ENCODE measurements at regions of chr7 and their contacts with region 1.

Region 1: GRCh38 chr7:95582578-95583293 is 13.6 kb downstream of the PDK4 start:
- DNase-seq: peak in 2 of 4 donors; percentile 15 to 42
- ATAC-seq: peak; percentile 45
- H3K4me3 ChIP-seq: no peak overlapping the region
- H3K27ac ChIP-seq: peak overlapping the region in 2 of 4 donors; percentile 2 to 18
- H3K4me1 ChIP-seq: peaks cover 23% of the 10 kb centered on the region
- H3K27me3 ChIP-seq: no peaks in the 10 kb centered on the region
- CTCF ChIP-seq: no peak
- POLR2A ChIP-seq: peak in 2 of 3 donors; percentile 30 to 42

Region 2: DNA sequence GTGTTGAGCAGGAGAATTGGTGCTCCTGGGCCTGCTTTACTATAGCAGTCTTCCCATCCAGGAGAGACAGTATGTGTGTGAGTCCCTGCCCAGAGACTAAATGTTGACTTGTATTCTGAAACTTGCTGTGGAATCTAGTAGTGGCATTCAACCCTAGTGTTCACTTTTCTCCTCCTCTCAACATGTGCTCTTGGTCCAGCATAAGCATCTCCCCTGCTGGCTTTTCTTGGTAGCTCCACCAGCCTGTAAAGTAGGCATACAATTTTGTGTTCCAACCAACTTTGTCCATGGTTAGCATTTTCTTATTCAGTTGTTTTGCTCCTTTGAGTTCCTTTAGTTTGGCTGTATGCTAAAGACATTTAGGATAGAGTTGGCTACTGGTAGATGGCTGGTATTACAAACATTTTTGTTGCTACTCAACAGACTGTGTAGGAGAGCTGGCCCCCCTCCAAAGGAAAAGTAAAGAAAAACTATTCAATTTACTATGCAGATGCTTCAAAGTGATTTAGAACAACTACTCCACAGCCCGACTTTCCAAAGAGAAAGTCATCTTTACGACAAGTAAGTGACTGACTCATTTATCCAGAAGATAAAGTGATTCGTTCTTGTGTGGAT is 51.0 kb before region 1 on chr7:
- intact Hi-C with region 1: loop called (anchors 10 kb)
- DNase-seq: no peak
- ATAC-seq: no peak
- H3K4me3 ChIP-seq: no peak overlapping the region
- H3K27ac ChIP-seq: no peak overlapping the region
- H3K4me1 ChIP-seq: peaks cover 6% of the 10 kb centered on the region
- H3K27me3 ChIP-seq: no peaks in the 10 kb centered on the region
- CTCF ChIP-seq: no peak
- POLR2A ChIP-seq: no peak

Region 3: DNA sequence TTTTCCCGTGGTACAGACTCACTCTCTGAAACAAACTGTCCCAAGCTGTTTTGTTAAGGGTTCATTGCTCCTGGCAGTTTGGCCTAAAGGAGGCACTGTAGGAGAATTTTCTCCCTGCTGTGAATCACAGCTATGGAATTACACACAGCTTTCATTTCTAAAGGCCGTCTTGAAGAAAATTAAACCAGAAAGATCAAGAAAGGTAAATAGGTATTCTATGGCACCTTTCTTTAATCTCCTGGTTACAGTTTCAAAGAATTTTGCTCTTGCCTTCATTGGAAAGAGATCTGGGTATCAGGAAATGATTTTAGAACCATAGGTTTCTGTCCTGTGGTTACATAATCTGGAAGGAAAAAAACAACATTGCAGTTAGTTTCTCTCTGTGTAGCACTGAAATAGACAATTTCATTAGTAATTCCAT is 37.6 kb before region 1 on chr7:
- intact Hi-C with region 1: no loop called
- DNase-seq: peak; percentile 66 to 75 (median 72)
- ATAC-seq: peak; percentile 79
- H3K4me3 ChIP-seq: no peak overlapping the region
- H3K27ac ChIP-seq: peak overlapping the region; percentile 59 to 74 (median 69)
- H3K4me1 ChIP-seq: peaks cover 52% of the 10 kb centered on the region
- H3K27me3 ChIP-seq: no peaks in the 10 kb centered on the region
- CTCF ChIP-seq: peak; percentile 44 to 94 (median 88)
- POLR2A ChIP-seq: no peak

Measured in body of pancreas (tissue), 4 donors.